GM12878 (cell line): ENCODE measurements at regions of chr11 and their contacts with region 1.

Region 1: GRCh38 chr11:36265793-36266628 is 23.2 kb downstream of the COMMD9 start:
- DNase-seq: no peak
- ATAC-seq: peak; percentile 95
- H3K4me3 ChIP-seq: no peak overlapping the region
- H3K27ac ChIP-seq: no peak overlapping the region
- H3K4me1 ChIP-seq: no peaks in the 10 kb centered on the region
- H3K27me3 ChIP-seq: no peaks in the 10 kb centered on the region
- CTCF ChIP-seq: peak; percentile 89 to 93 (median 92)
- EP300 ChIP-seq: no peak
- POLR2A ChIP-seq: no peak
- RAD21 ChIP-seq: peak; percentile 91

Region 2: DNA sequence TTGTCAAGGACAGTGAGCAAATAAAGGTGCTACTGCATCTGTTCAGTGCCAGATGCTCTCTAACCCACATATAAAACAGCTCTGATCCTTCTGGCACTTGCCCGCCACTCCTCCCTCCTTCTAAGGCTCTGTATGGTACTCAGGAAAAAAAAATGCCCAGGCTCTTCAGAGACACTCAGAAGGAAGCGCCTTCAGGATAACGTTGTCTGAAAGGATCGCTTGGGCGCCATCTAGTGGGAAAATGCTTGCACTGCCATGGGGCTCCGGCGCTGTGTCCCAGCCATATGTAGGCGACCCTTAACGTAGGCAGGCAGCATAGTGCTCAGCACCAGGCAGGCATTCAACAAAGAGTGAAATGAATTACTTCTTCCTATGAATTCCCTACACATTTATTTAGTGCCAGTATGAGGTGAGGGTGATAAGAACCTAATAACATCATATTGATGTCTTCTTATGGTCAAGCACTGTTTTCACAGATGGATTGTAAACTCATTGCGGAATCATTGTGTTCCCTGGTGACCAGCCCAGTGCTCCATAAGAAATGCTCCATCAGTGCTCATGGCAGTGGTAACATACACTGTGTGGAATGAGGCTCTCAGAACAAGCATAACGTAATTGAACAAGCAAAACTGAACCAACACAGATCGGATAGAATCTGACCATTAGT is 780.2 kb before region 1 on chr11:
- CTCF ChIA-PET with region 1: interaction called, 6 read pairs
- POLR2A ChIA-PET with region 1: no interaction called
- RAD21 ChIA-PET with region 1: interaction called, 3 read pairs
- SMC1A ChIA-PET with region 1: no interaction called
- in situ Hi-C with region 1: no loop called
- intact Hi-C with region 1: loop called (anchors 5 kb)
- DNase-seq: peak; percentile 7
- ATAC-seq: peak; percentile 100
- H3K4me3 ChIP-seq: no peak overlapping the region
- H3K27ac ChIP-seq: no peak overlapping the region
- H3K4me1 ChIP-seq: no peaks in the 10 kb centered on the region
- H3K27me3 ChIP-seq: no peaks in the 10 kb centered on the region; a peak in 1 of 4 replicates
- CTCF ChIP-seq: peak; percentile 82 to 92 (median 92)
- EP300 ChIP-seq: no peak
- POLR2A ChIP-seq: no peak
- RAD21 ChIP-seq: peak; percentile 66

Region 3: DNA sequence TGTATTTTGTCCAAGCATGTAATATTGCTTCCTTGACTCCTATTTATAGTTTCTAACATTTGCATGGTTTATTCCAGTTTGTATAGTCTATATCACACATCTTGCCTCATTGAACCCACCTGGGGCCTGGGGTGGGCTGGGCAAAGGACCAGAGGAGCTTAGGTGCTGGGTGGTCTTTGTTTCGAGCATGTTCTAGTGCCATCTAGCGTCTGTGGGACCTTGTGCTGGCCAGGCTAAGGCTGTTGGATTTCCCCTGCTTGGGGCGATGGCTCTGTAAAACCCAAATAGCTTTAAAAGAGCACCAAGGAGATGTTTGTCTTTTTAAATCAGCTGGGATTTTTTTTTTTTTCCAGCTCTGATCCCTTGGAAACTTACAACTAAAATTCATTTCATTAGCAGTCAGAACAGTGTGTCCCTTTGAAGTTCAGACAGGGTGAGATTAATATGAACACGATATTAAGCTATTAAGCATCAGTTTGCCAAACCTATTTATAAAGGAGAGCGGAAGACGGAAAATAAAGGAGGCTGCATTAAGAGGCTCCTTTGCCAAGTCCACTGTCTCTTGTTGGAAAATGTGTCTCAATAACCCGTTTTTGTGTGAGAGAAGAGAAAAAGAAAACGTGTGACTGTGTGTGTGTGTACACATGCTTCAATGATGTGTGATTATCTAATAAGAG is 134.2 kb before region 1 on chr11:
- CTCF ChIA-PET with region 1: interaction called, 19 read pairs
- POLR2A ChIA-PET with region 1: no interaction called
- RAD21 ChIA-PET with region 1: no interaction called
- SMC1A ChIA-PET with region 1: interaction called, 4 read pairs
- in situ Hi-C with region 1: no loop called
- intact Hi-C with region 1: no loop called
- DNase-seq: no peak
- ATAC-seq: peak; percentile 95
- H3K4me3 ChIP-seq: no peak overlapping the region
- H3K27ac ChIP-seq: no peak overlapping the region
- H3K4me1 ChIP-seq: no peaks in the 10 kb centered on the region
- H3K27me3 ChIP-seq: peaks cover 0 to 2% of the 10 kb centered on the region in 2 experiments; a peak in 2 of 4 replicates
- CTCF ChIP-seq: peak; percentile 63 to 77 (median 74)
- EP300 ChIP-seq: no peak
- POLR2A ChIP-seq: no peak
- RAD21 ChIP-seq: peak; percentile 78

Region 4: DNA sequence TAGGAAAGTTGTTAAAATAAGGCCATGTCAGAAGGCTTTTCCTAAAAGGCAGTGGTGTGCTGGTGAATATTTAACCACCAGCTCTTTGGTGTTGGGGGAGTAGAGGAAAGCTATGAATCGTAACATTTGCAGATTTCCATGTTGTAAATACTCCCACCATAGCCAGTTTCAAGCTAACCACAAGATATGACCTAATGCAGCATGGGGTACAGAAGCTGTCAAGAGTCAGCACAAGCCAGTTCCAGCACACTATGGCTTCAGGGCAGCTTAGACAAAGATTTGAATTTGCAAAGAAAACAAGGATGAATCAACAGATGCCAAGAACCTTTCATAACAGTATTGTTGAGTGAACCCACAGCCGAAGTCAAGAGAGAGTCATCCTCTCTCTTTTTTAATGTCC is 16.8 kb before region 1 on chr11:
- CTCF ChIA-PET with region 1: interaction called, 10 read pairs
- POLR2A ChIA-PET with region 1: no interaction called
- RAD21 ChIA-PET with region 1: interaction called, 7 read pairs
- SMC1A ChIA-PET with region 1: no interaction called
- in situ Hi-C with region 1: no loop called
- intact Hi-C with region 1: no loop called
- DNase-seq: no peak
- ATAC-seq: peak; percentile 85
- H3K4me3 ChIP-seq: no peak overlapping the region
- H3K27ac ChIP-seq: no peak overlapping the region
- H3K4me1 ChIP-seq: no peaks in the 10 kb centered on the region
- H3K27me3 ChIP-seq: no peaks in the 10 kb centered on the region; a peak in 2 of 4 replicates
- CTCF ChIP-seq: no peak
- EP300 ChIP-seq: no peak
- POLR2A ChIP-seq: no peak
- RAD21 ChIP-seq: no peak